Activated naive CD4-positive, alpha-beta T cell treated with anti-CD3 and anti-CD28 coated beads for 36 hours (primary cell): ENCODE measurements at regions of chr3 and their contacts with region 1.

Region 1: GRCh38 chr3:141311496-141312353 is 56.6 kb upstream of the ZBTB38 start:
- DNase-seq: peak; percentile 100
- H3K4me3 Mint-ChIP-seq: peak overlapping the region; percentile 100
- H3K27ac Mint-ChIP-seq: peak overlapping the region; percentile 98
- H3K4me1 Mint-ChIP-seq: peaks cover 46% of the 10 kb centered on the region
- H3K27me3 Mint-ChIP-seq: no peaks in the 10 kb centered on the region

Region 2: DNA sequence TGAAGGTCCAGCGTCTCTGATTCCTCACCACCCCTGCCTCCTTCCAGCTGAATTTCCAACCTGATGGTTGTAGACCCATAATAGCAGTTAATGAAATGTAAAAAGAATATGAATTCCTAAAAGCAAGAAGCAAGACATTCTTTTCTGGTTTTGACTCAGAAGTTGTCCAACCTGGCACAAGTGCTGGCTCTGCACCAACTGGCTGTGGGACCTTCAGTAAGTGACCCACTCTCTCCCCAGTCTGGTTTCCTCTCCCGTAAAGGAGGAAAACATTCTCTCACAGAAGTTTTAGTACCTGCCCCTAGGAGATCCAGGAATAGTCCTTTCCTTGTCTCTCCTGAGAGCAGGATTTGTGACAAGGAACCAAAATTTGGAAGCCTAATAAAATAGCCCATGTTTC is 870.7 kb before region 1 on chr3:
- CTCF ChIA-PET with region 1: no interaction called
- intact Hi-C with region 1: no loop called
- DNase-seq: no peak
- H3K4me3 Mint-ChIP-seq: no peak overlapping the region
- H3K27ac Mint-ChIP-seq: no peak overlapping the region
- H3K4me1 Mint-ChIP-seq: no peaks in the 10 kb centered on the region
- H3K27me3 Mint-ChIP-seq: peaks cover 2% of the 10 kb centered on the region

Region 3: DNA sequence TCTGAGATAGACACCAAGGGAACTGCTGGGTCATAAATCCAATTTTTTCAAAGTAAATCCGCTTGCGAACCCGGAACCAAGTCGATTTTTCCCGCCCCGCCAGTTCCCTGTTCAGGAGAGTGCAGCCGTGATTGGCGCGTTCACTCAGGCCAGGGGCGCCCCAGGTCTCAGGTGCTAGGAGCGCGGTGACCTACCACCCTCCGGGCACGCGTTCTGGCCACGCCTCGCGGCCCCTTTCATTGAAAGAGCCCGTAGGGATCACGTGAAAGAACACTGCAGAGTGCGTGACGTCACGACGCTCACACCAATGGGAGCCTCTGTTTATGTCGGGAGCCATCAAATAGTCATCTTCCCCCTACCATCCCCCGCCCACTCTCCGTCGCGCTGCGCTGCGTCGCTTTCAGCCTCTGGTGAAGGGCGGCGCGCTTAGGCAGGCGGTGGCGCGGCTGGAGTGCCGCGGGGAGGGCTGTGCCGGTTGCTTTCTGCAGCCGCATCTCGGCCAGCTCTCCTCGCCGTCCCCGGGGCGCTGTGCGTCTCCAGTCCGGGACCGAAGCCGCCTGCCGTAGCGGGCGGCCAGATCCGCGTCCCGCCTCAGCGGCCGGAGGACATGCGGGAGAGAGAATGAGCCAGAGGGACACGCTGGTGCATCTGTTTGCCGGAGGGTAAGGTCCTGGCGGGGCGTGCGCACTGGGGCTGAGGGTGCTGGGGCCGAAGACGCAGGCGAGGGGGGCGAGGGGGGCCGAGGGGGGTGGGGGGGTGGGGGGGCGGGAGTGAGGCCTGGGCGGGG is 370.1 kb before region 1 on chr3 and contains the start of gene SLC25A36:
- CTCF ChIA-PET with region 1: no interaction called
- intact Hi-C with region 1: loop called (anchors 1 kb)
- DNase-seq: peak; percentile 99
- H3K4me3 Mint-ChIP-seq: peak within 1 kb of the TSS; percentile 89
- H3K27ac Mint-ChIP-seq: peak within 1 kb of the TSS; percentile 88
- H3K4me1 Mint-ChIP-seq: peaks cover 35% of the 10 kb centered on the region
- H3K27me3 Mint-ChIP-seq: no peaks in the 10 kb centered on the region
- total RNA-seq, gene SLC25A36: 48.7 to 50.1 TPM

Region 4: GRCh38 chr3:141360888-141361598 is 49.3 kb after region 1 on chr3:
- CTCF ChIA-PET with region 1: interaction called, 12 read pairs
- intact Hi-C with region 1: loop called (anchors 1 kb)
- DNase-seq: no peak
- H3K4me3 Mint-ChIP-seq: no peak overlapping the region
- H3K27ac Mint-ChIP-seq: no peak overlapping the region
- H3K4me1 Mint-ChIP-seq: peaks cover 8% of the 10 kb centered on the region
- H3K27me3 Mint-ChIP-seq: no peaks in the 10 kb centered on the region

Region 5: DNA sequence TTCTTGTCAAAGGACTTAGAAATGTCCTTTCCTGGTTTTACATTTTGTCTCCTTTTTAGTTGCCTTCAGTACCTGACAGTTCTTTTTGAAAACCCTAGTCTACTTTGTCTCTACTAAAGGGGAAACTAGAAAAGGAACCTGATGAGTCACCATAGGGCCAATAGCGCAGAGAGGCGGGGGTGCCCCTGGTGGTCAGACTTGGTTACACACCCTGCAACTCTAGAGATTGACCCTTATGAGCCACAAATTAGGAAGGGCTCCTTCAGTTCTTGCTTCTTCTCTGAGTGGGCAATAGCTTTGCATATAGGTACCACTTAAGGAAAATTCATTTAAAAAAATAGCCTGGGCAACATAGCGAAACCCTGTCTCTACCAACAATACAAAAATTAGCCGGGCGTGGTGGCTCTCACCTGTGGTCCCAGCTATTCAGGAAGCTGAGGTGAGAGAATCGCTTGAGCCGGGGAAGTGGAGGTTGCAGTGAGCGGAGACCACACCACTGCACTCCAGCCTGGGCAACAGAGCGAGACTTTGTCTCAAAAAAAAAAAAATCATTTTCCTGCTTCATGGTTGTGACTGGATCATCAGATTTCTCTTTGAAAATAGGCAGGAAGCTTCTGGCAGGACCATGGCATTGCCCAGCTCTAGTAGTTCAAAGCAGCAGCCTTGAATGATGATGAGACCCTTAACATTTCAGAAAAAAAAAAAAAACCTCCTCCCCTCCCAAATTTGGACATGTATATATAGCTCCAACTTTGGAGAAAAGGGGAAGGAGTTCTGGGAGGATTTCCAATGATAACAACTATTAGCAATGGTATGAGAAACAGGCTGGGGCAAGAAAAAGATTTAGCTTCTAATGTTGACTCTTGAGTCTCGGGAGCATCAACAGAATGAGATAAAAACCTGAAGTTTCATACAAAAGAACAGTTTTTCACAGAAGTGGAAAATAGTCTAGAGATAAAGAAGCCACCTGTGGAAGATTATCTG is 129.9 kb after region 1 on chr3:
- CTCF ChIA-PET with region 1: interaction called, 30 read pairs
- intact Hi-C with region 1: loop called (anchors 1 kb)
- DNase-seq: peak; percentile 91
- H3K4me3 Mint-ChIP-seq: no peak overlapping the region
- H3K27ac Mint-ChIP-seq: peak overlapping the region; percentile 73
- H3K4me1 Mint-ChIP-seq: peaks cover 23% of the 10 kb centered on the region
- H3K27me3 Mint-ChIP-seq: no peaks in the 10 kb centered on the region

Region 6: GRCh38 chr3:141561426-141562034 is 249.8 kb after region 1 on chr3:
- CTCF ChIA-PET with region 1: interaction called, 3 read pairs
- intact Hi-C with region 1: loop called (anchors 2 kb)
- DNase-seq: peak; percentile 61
- H3K4me3 Mint-ChIP-seq: no peak overlapping the region
- H3K27ac Mint-ChIP-seq: no peak overlapping the region
- H3K4me1 Mint-ChIP-seq: peaks cover 33% of the 10 kb centered on the region
- H3K27me3 Mint-ChIP-seq: no peaks in the 10 kb centered on the region

Region 7: GRCh38 chr3:141875374-141875892 is 563.7 kb after region 1 on chr3:
- CTCF ChIA-PET with region 1: no interaction called
- intact Hi-C with region 1: loop called (anchors 1 kb)
- DNase-seq: peak; percentile 90
- H3K4me3 Mint-ChIP-seq: peak overlapping the region; percentile 92
- H3K27ac Mint-ChIP-seq: peak overlapping the region; percentile 93
- H3K4me1 Mint-ChIP-seq: peaks cover 28% of the 10 kb centered on the region
- H3K27me3 Mint-ChIP-seq: no peaks in the 10 kb centered on the region